ENCODE measurements at regions of chr4 and their contacts with region 1.

Region 1: GRCh38 chr4:84750253-84750959 is 167.5 kb downstream of the CDS1 start:
- DNase-seq: peak; percentile 1
- H3K4me3 Mint-ChIP-seq: no peak overlapping the region
- H3K27ac Mint-ChIP-seq: no peak overlapping the region
- H3K4me1 Mint-ChIP-seq: no peaks in the 10 kb centered on the region
- H3K27me3 Mint-ChIP-seq: no peaks in the 10 kb centered on the region
- CTCF ChIP-seq: peak; percentile 22

Region 2: GRCh38 chr4:84596826-84597225 is 153.6 kb before region 1 on chr4:
- CTCF ChIA-PET with region 1: no interaction called
- intact Hi-C with region 1: no loop called
- DNase-seq: peak; percentile 53
- H3K4me3 Mint-ChIP-seq: no peak overlapping the region
- H3K27ac Mint-ChIP-seq: peak overlapping the region; percentile 97
- H3K4me1 Mint-ChIP-seq: peaks cover 23% of the 10 kb centered on the region
- H3K27me3 Mint-ChIP-seq: no peaks in the 10 kb centered on the region
- CTCF ChIP-seq: no peak

Region 3: GRCh38 chr4:84971319-84971932 is 221.0 kb after region 1 on chr4:
- CTCF ChIA-PET with region 1: interaction called, 6 read pairs
- intact Hi-C with region 1: loop called (anchors 1 kb)
- DNase-seq: no peak
- H3K4me3 Mint-ChIP-seq: no peak overlapping the region
- H3K27ac Mint-ChIP-seq: no peak overlapping the region
- H3K4me1 Mint-ChIP-seq: peaks cover 8% of the 10 kb centered on the region
- H3K27me3 Mint-ChIP-seq: no peaks in the 10 kb centered on the region
- CTCF ChIP-seq: no peak